ENCODE measurements at regions of chr10 and their contacts with region 1.

Region 1: DNA sequence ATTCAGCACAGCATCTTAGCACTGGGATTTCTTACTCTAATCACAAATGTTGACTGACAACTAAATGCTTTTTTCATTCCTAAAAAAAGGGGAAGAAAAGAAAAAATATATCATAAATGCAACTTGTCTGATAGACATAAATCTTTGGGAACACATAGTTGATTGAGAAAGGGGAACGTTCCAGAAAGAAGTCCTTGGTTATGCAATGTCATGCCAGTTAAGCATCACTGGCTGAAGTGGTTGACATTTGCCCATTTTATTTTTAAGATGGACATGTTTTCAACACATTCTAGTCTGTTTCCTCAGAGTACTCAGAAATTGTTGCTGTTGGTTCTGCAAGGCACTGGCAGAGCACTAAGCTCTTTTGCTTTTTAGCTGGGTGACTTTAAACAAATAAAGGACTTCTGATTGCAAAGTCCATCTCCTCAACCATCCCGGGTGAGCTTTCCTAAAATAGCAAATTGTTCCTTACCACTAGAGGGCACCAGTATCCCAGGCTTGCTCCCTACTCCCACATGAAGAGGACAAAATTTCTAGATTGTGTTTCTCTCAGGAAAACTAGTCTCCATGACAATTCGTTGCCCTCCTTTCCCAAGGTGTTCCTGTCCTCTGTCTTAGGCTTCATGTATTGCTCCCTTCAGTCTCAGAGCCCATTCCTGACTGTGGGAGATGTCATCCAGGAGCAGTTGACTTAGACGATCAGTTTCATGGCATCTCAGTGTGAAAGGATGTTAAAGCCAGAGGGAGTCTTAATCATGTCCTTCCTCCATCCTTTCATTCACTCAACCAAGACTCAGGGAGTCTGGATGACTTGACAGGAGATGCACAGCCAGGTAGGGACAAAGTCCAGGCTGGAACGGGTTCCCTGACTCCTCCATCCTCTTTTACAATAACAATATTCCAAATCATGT is 23.9 kb downstream of the OPALIN start:
- DNase-seq: peak in 1 of 2 experiments; percentile 66
- H3K4me3 ChIP-seq: no peak overlapping the region
- H3K4me3 Mint-ChIP-seq: no peak overlapping the region
- H3K27ac Mint-ChIP-seq: no peak overlapping the region
- H3K4me1 ChIP-seq: no peaks in the 10 kb centered on the region
- H3K4me1 Mint-ChIP-seq: no peaks in the 10 kb centered on the region
- H3K27me3 ChIP-seq: no peaks in the 10 kb centered on the region
- H3K27me3 Mint-ChIP-seq: peaks cover 13% of the 10 kb centered on the region
- CTCF ChIP-seq: peak; percentile 73 to 83

Region 2: DNA sequence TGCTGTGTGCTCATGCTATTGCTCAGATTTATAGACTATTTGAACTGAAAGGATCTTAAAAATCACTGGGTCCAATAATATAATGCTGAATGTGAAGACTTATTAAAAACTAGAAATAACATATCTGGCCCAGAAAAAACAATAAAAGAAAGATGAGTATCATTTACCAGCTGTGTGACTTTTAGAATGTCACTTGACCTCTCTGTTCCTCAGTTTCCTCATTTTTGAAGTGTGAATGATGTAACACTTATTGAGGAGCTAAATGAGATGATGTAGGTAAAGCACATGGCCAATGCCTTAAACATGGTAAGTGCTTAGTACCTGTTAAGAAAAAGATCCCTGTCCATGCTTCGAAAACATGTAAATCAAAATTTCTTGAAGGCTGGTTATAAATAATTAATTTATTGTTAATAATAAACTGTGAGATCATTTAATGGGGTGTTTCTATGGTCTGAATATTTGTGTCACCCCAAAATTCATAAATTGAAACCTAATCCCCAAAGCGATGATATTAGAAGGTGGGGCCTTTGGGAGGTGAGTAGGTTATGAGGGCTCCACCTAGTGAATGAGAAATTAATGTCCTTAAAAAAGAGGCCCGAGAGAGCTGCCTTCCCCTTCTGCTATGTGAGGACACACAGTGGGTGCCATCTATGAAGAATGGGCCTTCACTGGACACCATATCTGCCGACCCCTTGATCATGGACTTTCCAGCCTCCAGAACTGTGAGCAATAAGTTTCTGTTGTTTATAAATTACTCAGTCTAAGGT is 17.6 kb before region 1 on chr10:
- CTCF ChIA-PET with region 1: interaction called, 10 read pairs
- POLR2A ChIA-PET with region 1: no interaction called
- intact Hi-C with region 1: no loop called
- DNase-seq: no peak
- H3K4me3 ChIP-seq: no peak overlapping the region
- H3K4me3 Mint-ChIP-seq: no peak overlapping the region
- H3K27ac Mint-ChIP-seq: no peak overlapping the region
- H3K4me1 ChIP-seq: no peaks in the 10 kb centered on the region
- H3K4me1 Mint-ChIP-seq: no peaks in the 10 kb centered on the region
- H3K27me3 ChIP-seq: no peaks in the 10 kb centered on the region
- H3K27me3 Mint-ChIP-seq: peaks cover 7% of the 10 kb centered on the region
- CTCF ChIP-seq: no peak

Region 3: DNA sequence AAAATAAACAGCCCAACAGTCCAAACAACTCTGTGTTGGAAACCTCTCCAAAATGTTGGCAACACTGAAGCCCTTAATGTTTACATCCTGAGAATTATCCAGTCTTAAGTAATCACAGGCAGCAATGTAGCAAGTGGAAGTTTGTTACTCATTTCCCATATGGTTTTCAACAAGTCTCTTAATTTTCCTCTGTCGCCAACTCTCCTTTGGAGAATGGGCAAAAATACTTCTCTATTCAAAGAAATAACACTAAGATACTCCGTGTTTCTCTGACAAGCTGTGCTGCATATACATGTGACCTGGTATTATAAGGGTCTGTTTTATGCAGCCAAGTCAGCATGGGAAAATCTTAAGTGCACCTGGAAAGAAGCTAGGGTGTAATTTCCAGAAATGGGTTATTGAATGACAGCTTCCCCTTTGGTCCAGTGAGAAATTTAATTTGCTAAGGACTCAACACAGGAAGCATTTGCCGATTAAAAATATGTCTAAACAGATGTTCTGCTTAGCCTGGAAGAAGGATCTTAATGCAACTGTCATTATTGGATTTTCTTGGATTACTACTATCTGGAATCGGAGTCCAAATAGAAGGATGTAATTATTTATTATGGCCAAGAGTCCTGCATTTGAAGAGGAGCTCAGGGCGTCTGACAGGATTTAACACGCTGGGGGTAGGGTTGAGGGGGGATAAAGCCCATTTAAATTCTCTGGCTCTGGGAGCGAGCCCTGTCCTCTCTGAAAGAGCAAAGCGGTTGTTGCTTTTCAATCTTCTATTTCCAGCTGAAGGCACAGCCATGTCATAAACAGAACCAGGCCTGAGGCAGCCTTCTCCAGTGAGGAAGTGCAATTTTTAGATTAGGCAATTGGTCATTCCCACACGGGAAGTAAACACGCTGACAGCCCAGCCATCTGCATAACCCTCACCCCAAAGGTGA is 105.8 kb after region 1 on chr10:
- CTCF ChIA-PET with region 1: no interaction called
- POLR2A ChIA-PET with region 1: no interaction called
- intact Hi-C with region 1: no loop called
- DNase-seq: no peak
- H3K4me3 ChIP-seq: no peak overlapping the region
- H3K4me3 Mint-ChIP-seq: no peak overlapping the region
- H3K27ac Mint-ChIP-seq: no peak overlapping the region
- H3K4me1 ChIP-seq: no peaks in the 10 kb centered on the region; the same call in 1 of the 2 replicates
- H3K4me1 Mint-ChIP-seq: no peaks in the 10 kb centered on the region
- H3K27me3 ChIP-seq: no peaks in the 10 kb centered on the region
- H3K27me3 Mint-ChIP-seq: peaks cover 9% of the 10 kb centered on the region
- CTCF ChIP-seq: no peak